HCT116 (cell line): ENCODE measurements at regions of chr11 and their contacts with region 1.

Region 1: GRCh38 chr11:87374038-87374807 is 336.5 kb downstream of the TMEM135 start:
- DNase-seq: no peak
- ATAC-seq: no peak
- H3K4me3 ChIP-seq: no peak overlapping the region
- H3K27ac ChIP-seq: no peak overlapping the region
- H3K4me1 ChIP-seq: no peaks in the 10 kb centered on the region
- H3K27me3 ChIP-seq: no peaks in the 10 kb centered on the region
- CTCF ChIP-seq: no peak
- POLR2A ChIP-seq: no peak
- RAD21 ChIP-seq: no peak

Region 2: GRCh38 chr11:87352759-87353707 is 21.2 kb before region 1 on chr11:
- CTCF ChIA-PET with region 1: no interaction called
- POLR2A ChIA-PET with region 1: no interaction called
- RAD21 ChIA-PET with region 1: no interaction called
- intact Hi-C with region 1: no loop called
- DNase-seq: peak; percentile 57
- ATAC-seq: peak; percentile 100
- H3K4me3 ChIP-seq: no peak overlapping the region
- H3K27ac ChIP-seq: no peak overlapping the region
- H3K4me1 ChIP-seq: peaks cover 0 to 7% of the 10 kb centered on the region in 2 experiments; a peak in 1 of 4 replicates
- H3K27me3 ChIP-seq: no peaks in the 10 kb centered on the region
- CTCF ChIP-seq: peak; percentile 69 to 98 (median 95)
- POLR2A ChIP-seq: no peak
- RAD21 ChIP-seq: peak; percentile 95

Region 3: DNA sequence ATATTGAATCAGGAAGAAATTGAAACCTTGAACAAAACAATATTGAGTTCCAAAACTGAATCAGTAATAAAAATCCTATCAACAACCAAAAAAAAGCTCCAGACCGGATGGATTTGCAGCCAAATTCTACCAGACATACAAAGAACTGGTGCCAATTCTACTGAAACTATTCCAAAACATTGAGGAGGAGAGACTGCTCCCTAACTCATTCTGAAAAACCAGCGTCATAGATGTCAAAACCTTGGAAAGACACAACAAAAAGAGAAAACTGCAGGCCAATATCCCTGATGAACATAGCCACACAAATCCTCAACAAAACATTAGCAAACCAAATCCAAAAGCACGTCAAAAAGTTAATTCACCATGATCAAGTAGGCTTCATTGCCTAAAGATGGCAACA is 17.3 kb after region 1 on chr11:
- CTCF ChIA-PET with region 1: no interaction called
- POLR2A ChIA-PET with region 1: no interaction called
- RAD21 ChIA-PET with region 1: no interaction called
- intact Hi-C with region 1: loop called (anchors 2 kb)
- DNase-seq: no peak
- ATAC-seq: no peak
- H3K4me3 ChIP-seq: no peak overlapping the region
- H3K27ac ChIP-seq: no peak overlapping the region
- H3K4me1 ChIP-seq: no peaks in the 10 kb centered on the region
- H3K27me3 ChIP-seq: no peaks in the 10 kb centered on the region
- CTCF ChIP-seq: no peak
- POLR2A ChIP-seq: no peak
- RAD21 ChIP-seq: no peak

Region 4: GRCh38 chr11:87405843-87406242 is 31.6 kb after region 1 on chr11:
- CTCF ChIA-PET with region 1: no interaction called
- POLR2A ChIA-PET with region 1: no interaction called
- RAD21 ChIA-PET with region 1: no interaction called
- intact Hi-C with region 1: loop called (anchors 5 kb)
- DNase-seq: no peak
- ATAC-seq: no peak
- H3K4me3 ChIP-seq: no peak overlapping the region
- H3K27ac ChIP-seq: no peak overlapping the region
- H3K4me1 ChIP-seq: no peaks in the 10 kb centered on the region
- H3K27me3 ChIP-seq: no peaks in the 10 kb centered on the region
- CTCF ChIP-seq: no peak
- POLR2A ChIP-seq: no peak
- RAD21 ChIP-seq: no peak

Region 5: GRCh38 chr11:87528752-87529151 is 154.5 kb after region 1 on chr11:
- CTCF ChIA-PET with region 1: no interaction called
- POLR2A ChIA-PET with region 1: no interaction called
- RAD21 ChIA-PET with region 1: no interaction called
- intact Hi-C with region 1: no loop called
- DNase-seq: no peak
- ATAC-seq: no peak
- H3K4me3 ChIP-seq: no peak overlapping the region
- H3K27ac ChIP-seq: no peak overlapping the region
- H3K4me1 ChIP-seq: no peaks in the 10 kb centered on the region
- H3K27me3 ChIP-seq: peaks cover 4% of the 10 kb centered on the region; the same call in 1 of the 2 replicates
- CTCF ChIP-seq: no peak
- POLR2A ChIP-seq: no peak
- RAD21 ChIP-seq: no peak